Posterior cingulate gyrus (tissue), 11 donors: ENCODE measurements at regions of chr18 and their contacts with region 1.

Region 1: GRCh38 chr18:5546660-5547059 is 2.9 kb upstream of the EPB41L3 start:
- DNase-seq: peak in 7 of 10 donors; percentile 19 to 91 (median 35)

Region 2: GRCh38 chr18:5456577-5457463 is 89.8 kb before region 1 on chr18:
- intact Hi-C with region 1: loop called (anchors 10 kb)
- DNase-seq: peak in 7 of 10 donors; percentile 32 to 90 (median 39)

Region 3: GRCh38 chr18:5510135-5510846 is 36.4 kb before region 1 on chr18:
- intact Hi-C with region 1: no loop called
- DNase-seq: no peak